Psoas muscle (tissue), 8 donors: ENCODE measurements at regions of chr7 and their contacts with region 1.

Region 1: DNA sequence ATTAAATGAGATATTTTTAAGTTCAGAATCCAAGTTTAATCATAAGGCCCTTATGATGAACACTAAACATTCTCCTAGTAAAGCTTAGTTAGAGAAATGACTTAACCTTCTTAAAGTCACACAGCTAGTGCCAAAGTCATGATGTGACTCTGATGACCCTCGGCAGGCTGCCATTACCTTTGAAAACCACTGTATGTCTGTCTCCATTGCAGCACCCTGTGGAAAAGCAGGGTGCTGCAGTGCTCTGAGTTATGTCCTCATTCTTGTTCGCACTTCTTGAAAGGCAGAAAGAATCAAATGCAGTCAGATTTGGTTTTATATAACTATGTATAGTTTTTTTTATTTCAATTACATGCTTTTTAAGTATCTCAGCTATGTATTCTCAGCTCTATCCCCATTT is 105.0 kb downstream of the PHTF2 start:
- DNase-seq: peak; percentile 22 to 70
- ATAC-seq: peak; percentile 80 to 96 (median 92)
- H3K4me3 ChIP-seq: no peak overlapping the region
- H3K27ac ChIP-seq: no peak overlapping the region
- H3K4me1 ChIP-seq: no peaks in the 10 kb centered on the region
- H3K27me3 ChIP-seq: no peaks in the 10 kb centered on the region
- CTCF ChIP-seq: peak; percentile 62

Region 2: GRCh38 chr7:77657427-77658224 is 246.0 kb before region 1 on chr7:
- intact Hi-C with region 1: loop called (anchors 5 to 10 kb)
- DNase-seq: no peak
- ATAC-seq: peak in 2 of 4 donors; percentile 69 to 83
- H3K4me3 ChIP-seq: no peak overlapping the region
- H3K27ac ChIP-seq: no peak overlapping the region
- H3K4me1 ChIP-seq: no peaks in the 10 kb centered on the region
- H3K27me3 ChIP-seq: no peaks in the 10 kb centered on the region
- CTCF ChIP-seq: peak; percentile 59

Region 3: DNA sequence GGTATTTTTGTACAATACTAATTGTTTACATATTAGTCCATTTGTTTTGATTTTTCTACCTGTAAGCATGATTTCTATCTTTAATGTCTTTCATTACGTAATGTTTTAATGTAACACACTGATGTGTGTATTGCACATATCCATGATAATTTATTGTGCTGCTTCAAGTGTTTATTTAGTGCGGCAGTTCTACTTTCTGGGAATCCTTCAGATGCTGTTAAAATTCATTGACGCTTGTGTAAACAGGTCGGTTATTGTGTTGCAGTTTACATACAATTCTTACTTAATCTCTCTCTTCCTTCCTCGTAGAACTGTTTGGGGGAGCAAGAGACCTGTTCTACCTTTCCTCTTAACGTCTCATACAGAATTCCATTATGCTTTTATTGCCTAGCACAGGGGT is 112.3 kb before region 1 on chr7:
- intact Hi-C with region 1: loop called in 1 of 2 experiments (anchors 5 kb)
- DNase-seq: no peak
- ATAC-seq: no peak
- H3K4me3 ChIP-seq: no peak overlapping the region
- H3K27ac ChIP-seq: no peak overlapping the region
- H3K4me1 ChIP-seq: peaks cover 20% of the 10 kb centered on the region
- H3K27me3 ChIP-seq: no peaks in the 10 kb centered on the region
- CTCF ChIP-seq: no peak

Region 4: DNA sequence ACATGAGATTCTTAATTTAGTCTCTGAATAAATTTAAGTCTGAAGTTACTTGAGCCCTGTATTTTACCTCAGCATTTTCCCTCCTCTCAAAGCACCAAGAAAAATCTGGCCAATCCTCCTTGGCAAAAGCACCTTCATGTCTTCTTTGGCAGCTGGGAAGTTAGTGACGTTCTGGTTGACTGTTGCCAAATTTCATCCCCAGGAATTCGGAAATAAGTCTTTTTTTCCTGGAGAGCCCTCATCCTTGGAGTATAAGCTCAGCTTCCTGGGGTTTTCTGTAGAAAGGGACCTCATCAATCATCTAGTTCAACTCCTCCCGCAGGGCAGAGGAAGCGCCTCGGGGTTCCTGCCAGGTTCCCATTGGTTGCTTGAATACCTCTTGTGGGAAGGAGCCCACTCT is 272.6 kb after region 1 on chr7:
- intact Hi-C with region 1: no loop called
- DNase-seq: no peak
- ATAC-seq: no peak
- H3K4me3 ChIP-seq: no peak overlapping the region
- H3K27ac ChIP-seq: no peak overlapping the region
- H3K4me1 ChIP-seq: peaks cover 7% of the 10 kb centered on the region
- H3K27me3 ChIP-seq: no peaks in the 10 kb centered on the region
- CTCF ChIP-seq: no peak